A549 (cell line): ENCODE measurements at regions of chr3 and their contacts with region 1.

Region 1: DNA sequence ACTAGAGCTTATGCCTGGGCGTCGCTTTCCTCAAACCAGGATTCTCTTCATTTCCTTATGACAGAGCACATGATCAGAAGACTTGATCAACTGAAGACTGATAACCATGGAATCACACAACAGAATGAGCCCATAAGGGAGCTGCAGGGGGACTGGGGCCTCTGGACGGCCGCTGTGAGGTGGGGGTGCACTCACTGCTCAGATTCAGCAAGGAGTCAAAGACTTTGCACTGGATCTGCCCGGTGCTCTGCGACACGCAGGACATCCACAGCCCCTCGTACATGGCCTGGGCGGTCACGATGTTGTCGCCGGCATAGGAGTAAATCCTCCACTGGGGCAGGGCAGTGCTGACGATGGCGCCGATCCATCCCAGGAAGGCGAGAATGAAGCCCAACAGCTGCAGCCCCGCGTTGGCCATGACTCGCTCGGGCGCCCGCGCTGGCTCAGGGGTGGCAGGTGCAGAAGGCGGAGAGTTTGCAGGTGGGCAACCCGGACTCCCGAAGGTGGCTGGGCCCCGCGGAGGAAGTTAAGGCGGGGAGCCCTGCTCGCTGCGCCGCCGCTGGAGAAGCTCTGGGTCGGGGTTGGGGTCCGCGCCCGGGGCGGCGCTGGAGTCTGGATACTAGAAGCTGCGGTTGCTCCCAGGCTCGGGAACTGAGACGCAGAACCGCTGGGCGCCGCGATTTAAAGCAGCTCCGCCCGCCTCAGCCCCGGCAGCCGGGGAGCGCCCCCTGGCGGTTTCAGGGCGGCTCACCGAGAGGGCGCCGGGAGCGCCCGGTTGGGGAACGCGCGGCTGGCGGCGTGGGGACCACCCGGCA is at the start of gene CLDN1:
- DNase-seq: peak; percentile 59 to 80
- ATAC-seq: peak; percentile 86 to 95
- H3K4me3 ChIP-seq: peak within 1 kb of the TSS; percentile 81
- H3K27ac ChIP-seq: peak within 1 kb of the TSS; percentile 87 to 90
- H3K4me1 ChIP-seq: peaks cover 37% of the 10 kb centered on the region; the same call in 2 of the 3 replicates
- CTCF ChIP-seq: peak; percentile 84
- EP300 ChIP-seq: no peak
- POLR2A ChIP-seq: peak; percentile 55
- RAD21 ChIP-seq: peak; percentile 68 to 87
- polyA plus RNA-seq, gene CLDN1: 97.0 and 142 TPM in 2 replicates

Region 2: DNA sequence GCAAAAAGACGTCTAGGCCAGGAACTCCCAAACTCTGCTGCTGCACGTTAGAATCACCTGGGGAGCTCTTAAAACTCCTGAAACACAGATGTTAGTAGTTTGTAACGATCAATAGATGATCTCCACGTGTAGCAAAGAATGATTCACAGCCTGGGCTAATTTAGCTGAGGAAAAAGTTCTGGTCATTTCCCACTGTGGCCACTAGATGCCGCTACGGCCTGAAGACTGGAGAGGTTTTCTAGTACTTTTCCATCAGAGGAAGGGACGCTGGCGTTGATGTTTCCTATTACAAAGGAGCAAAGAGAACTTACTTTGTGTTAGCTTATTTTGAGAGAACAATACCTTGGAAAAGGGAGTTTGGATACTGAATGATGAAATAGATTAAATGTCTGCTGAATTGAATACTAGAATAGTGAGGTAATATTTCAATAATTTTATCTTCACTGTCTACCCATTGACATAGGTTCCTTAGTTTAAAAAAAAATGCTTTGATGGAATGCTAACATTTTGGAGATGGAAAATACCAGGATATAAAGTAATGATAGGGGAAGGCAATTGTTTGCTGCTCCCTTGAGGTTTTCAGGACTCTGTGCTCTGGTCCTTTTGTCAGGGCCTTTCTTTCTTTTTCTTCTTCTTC is 360.4 kb before region 1 on chr3:
- CTCF ChIA-PET with region 1: interaction called, 11 read pairs
- POLR2A ChIA-PET with region 1: interaction called, 7 read pairs
- DNase-seq: peak; percentile 70 to 74
- ATAC-seq: peak; percentile 59 to 82; a peak in 4 of 6 replicates
- H3K4me3 ChIP-seq: no peak overlapping the region
- H3K27ac ChIP-seq: peak overlapping the region; percentile 59 to 63
- H3K4me1 ChIP-seq: peaks cover 14% of the 10 kb centered on the region
- CTCF ChIP-seq: peak; percentile 78
- EP300 ChIP-seq: no peak
- POLR2A ChIP-seq: no peak
- RAD21 ChIP-seq: peak; percentile 87 to 90

Region 3: GRCh38 chr3:190224863-190225692 is 96.9 kb before region 1 on chr3:
- CTCF ChIA-PET with region 1: interaction called, 105 read pairs
- POLR2A ChIA-PET with region 1: interaction called, 13 read pairs
- DNase-seq: peak in 1 of 2 experiments; percentile 46
- ATAC-seq: peak in 1 of 2 experiments; percentile 67; a peak in 3 of 6 replicates
- H3K4me3 ChIP-seq: no peak overlapping the region
- H3K27ac ChIP-seq: no peak overlapping the region; a peak in 1 of 6 replicates
- H3K4me1 ChIP-seq: peaks cover 12% of the 10 kb centered on the region
- CTCF ChIP-seq: peak; percentile 68
- EP300 ChIP-seq: no peak
- POLR2A ChIP-seq: no peak
- RAD21 ChIP-seq: peak; percentile 68 to 77

Region 4: GRCh38 chr3:190308154-190308553 is 13.8 kb before region 1 on chr3:
- CTCF ChIA-PET with region 1: interaction called, 10 read pairs
- POLR2A ChIA-PET with region 1: interaction called, 6 read pairs
- DNase-seq: no peak
- ATAC-seq: no peak
- H3K4me3 ChIP-seq: no peak overlapping the region
- H3K27ac ChIP-seq: peak overlapping the region; percentile 16 to 45; a peak in 2 of 6 replicates
- H3K4me1 ChIP-seq: peaks cover 60% of the 10 kb centered on the region
- CTCF ChIP-seq: no peak
- EP300 ChIP-seq: no peak
- POLR2A ChIP-seq: no peak
- RAD21 ChIP-seq: no peak

Region 5: DNA sequence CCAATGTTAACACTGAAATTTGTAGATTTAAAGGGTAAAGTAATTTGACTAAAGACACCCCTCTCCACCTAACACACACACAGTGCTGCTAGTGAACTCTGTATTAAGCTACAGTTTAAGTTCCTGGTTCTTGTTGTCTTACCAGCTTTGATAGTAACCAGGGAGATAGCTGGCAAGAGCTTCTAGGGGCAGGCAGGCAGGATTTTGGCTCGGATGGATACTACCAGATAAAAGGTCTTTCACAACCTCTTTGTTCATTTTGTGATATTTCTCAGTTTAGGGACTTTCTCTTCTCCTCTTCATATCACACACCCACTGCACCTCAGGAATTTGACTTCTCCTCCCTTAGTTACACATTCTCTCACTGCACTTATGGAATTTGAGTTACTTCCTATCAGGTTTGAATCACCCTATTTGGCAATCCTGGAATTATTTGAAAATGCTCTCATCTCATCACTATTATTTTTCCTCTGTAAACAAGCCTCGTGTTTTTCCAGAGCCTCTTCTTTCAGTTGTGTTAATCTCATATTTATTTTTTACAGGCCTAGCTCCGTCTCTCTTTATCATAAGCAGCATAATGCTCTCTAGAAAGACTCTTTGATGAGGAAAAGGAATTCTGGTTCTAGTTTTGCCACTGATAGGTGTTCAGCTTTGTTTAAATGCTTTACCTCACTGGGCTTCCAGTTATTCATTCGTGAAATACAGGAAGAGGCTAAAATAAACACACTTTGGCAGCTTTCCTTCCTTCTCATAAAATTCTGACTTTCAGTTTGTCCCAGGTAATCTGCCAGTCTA is 23.2 kb after region 1 on chr3:
- CTCF ChIA-PET with region 1: interaction called, 20 read pairs
- POLR2A ChIA-PET with region 1: interaction called, 27 read pairs
- DNase-seq: peak in 1 of 2 experiments; percentile 96
- ATAC-seq: peak; percentile 95 to 98
- H3K4me3 ChIP-seq: peak overlapping the region; percentile 36
- H3K27ac ChIP-seq: peak overlapping the region; percentile 95 to 97
- H3K4me1 ChIP-seq: peaks cover 34% of the 10 kb centered on the region
- CTCF ChIP-seq: no peak
- EP300 ChIP-seq: peak; percentile 85 to 93; a peak in 4 of 5 replicates
- POLR2A ChIP-seq: no peak
- RAD21 ChIP-seq: peak; percentile 12 to 50; a peak in 4 of 5 replicates

Region 6: DNA sequence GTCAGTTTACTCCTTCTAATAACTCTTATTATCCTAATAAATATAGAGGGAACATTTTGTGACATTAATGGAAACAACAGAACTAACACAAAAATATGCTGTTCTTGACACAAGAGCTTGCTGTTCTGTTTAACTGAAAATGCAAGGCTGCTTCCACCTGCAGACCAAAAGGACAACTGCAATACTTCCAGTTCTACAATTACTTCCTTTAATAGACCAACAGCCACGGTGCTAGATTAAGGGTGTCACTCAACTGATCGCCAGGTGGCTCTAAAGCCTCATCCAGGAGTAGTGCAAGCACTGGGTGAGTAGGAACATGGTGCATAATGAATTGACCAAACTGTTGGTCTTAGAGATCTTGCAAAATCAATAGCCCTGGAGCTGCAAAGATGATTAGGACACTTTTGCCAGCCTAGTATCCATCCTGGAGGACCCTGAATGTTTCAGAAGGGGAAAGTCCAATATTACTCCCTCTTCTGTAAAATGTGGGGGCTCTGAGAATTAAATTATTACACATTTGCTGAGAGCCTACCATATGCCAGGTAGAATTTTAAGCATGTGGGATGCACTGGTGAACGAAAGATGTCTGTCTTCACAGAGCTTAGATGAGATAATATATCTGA is 62.4 kb after region 1 on chr3:
- CTCF ChIA-PET with region 1: interaction called, 33 read pairs
- POLR2A ChIA-PET with region 1: interaction called, 17 read pairs
- DNase-seq: peak; percentile 58 to 91
- ATAC-seq: peak; percentile 79 to 91
- H3K4me3 ChIP-seq: no peak overlapping the region
- H3K27ac ChIP-seq: peak overlapping the region; percentile 82 to 96
- H3K4me1 ChIP-seq: peaks cover 46% of the 10 kb centered on the region
- CTCF ChIP-seq: peak; percentile 85
- EP300 ChIP-seq: no peak
- POLR2A ChIP-seq: no peak
- RAD21 ChIP-seq: peak; percentile 89 to 94

Region 7: DNA sequence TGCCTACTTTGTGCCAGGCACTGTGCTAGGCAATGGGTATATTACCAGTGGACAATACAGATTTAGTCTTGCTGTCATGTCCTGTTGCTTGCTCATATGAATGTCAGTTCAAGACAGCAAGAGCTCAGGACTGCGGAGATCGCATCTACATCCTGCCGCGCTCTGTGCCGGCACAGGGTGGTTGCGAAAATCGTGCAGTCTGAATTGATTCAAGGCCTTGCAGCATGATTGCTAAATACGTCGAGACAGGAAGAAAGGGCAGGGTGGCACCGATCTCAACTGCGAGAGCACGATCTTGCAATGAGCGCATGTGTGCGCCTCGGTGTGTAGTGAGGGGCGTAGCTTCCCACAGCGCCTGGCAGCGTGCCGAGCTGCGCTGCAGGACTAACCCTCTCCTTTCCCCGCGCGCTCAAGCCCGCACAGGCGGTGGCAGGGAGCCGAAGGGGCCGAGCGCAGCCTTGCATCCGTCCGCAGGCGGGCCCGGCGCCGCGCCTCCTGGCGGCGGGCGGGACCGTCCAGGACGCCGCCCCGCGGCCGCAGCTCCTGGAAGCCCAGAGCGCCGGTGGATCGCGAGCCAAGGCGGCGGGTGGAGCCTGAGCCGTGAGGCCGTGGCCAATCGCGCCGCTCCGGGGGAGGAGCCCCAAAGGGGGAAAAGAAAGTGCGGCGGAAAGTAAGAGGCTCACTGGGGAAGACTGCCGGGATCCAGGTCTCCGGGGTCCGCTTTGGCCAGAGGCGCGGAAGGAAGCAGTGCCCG is 191.6 kb after region 1 on chr3 and contains the start of gene IL1RAP:
- CTCF ChIA-PET with region 1: interaction called, 3 read pairs
- POLR2A ChIA-PET with region 1: interaction called, 10 read pairs
- DNase-seq: peak; percentile 81 to 89
- ATAC-seq: peak; percentile 93 to 97
- H3K4me3 ChIP-seq: peak within 1 kb of the TSS; percentile 85
- H3K27ac ChIP-seq: peak within 1 kb of the TSS; percentile 77 to 88
- H3K4me1 ChIP-seq: peaks cover 39% of the 10 kb centered on the region
- CTCF ChIP-seq: peak; percentile 52
- EP300 ChIP-seq: no peak
- POLR2A ChIP-seq: peak; percentile 69
- RAD21 ChIP-seq: peak; percentile 6 to 60; a peak in 4 of 5 replicates
- polyA plus RNA-seq, gene IL1RAP: 18.3 and 18.5 TPM in 2 replicates